Heart right ventricle (tissue), 16 donors: ENCODE measurements at regions of chr7 and their contacts with region 1.

Region 1: GRCh38 chr7:2451171-2452073 is 24.8 kb downstream of the GRIFIN start:
- DNase-seq: peak; percentile 87 to 91
- ATAC-seq: peak; percentile 95 to 98 (median 98)
- H3K4me3 ChIP-seq: peak overlapping the region in 9 of 10 donors; percentile 32 to 58 (median 55)
- H3K27ac ChIP-seq: peak overlapping the region in 5 of 10 donors; percentile 8 to 62 (median 44)
- H3K4me1 ChIP-seq: peaks cover 7 to 15% (median 11%) of the 10 kb centered on the region in 9 donors
- H3K27me3 ChIP-seq: no peaks in the 10 kb centered on the region
- CTCF ChIP-seq: peak; percentile 75 to 95 (median 91)

Region 2: GRCh38 chr7:2471396-2471795 is 20.0 kb after region 1 on chr7:
- intact Hi-C with region 1: loop called in 1 of 10 experiments (anchors 1 kb)
- DNase-seq: peak; percentile 63 to 77
- ATAC-seq: peak; percentile 47 to 81 (median 72)
- H3K4me3 ChIP-seq: no peak overlapping the region
- H3K27ac ChIP-seq: peak overlapping the region in 6 of 10 donors; percentile 29 to 75 (median 37)
- H3K4me1 ChIP-seq: peaks cover 5 to 28% (median 10%) of the 10 kb centered on the region in 9 donors
- H3K27me3 ChIP-seq: peaks cover 0 to 19% (median 0%) of the 10 kb centered on the region in 7 donors
- CTCF ChIP-seq: no peak